ENCODE measurements at regions of chr20 and their contacts with region 1.

Region 1: DNA sequence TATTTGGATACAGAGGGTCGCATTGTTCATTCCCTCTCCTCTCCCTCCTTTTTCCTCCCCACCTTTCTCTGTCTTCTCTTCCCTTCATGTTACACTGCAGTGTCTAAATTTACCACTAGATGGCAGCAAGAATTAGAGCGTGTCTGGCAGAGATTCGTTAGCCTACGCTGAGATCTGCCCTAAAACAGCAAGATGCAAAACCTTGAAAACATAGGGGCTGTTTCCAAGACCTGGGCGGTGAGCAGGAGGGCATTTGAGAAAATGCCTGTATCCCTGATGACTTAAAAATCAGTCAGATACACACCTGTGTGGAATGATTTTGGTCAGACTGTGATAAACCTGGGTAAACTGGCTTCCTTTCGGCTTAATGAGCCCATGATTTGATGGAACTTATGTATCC is 101.5 kb upstream of the ISM1 start:
- DNase-seq: peak; percentile 77
- H3K4me3 Mint-ChIP-seq: no peak overlapping the region
- H3K27ac Mint-ChIP-seq: no peak overlapping the region
- H3K4me1 Mint-ChIP-seq: peaks cover 6% of the 10 kb centered on the region
- H3K27me3 Mint-ChIP-seq: no peaks in the 10 kb centered on the region
- CTCF ChIP-seq: peak; percentile 69

Region 2: GRCh38 chr20:13131688-13132087 is 12.1 kb after region 1 on chr20:
- CTCF ChIA-PET with region 1: interaction called, 31 read pairs
- POLR2A ChIA-PET with region 1: no interaction called
- intact Hi-C with region 1: no loop called
- DNase-seq: no peak
- H3K4me3 Mint-ChIP-seq: no peak overlapping the region
- H3K27ac Mint-ChIP-seq: no peak overlapping the region
- H3K4me1 Mint-ChIP-seq: no peaks in the 10 kb centered on the region
- H3K27me3 Mint-ChIP-seq: no peaks in the 10 kb centered on the region
- CTCF ChIP-seq: no peak

Region 3: GRCh38 chr20:13169086-13169485 is 49.5 kb after region 1 on chr20:
- CTCF ChIA-PET with region 1: interaction called, 10 read pairs
- POLR2A ChIA-PET with region 1: no interaction called
- intact Hi-C with region 1: no loop called
- DNase-seq: no peak
- H3K4me3 Mint-ChIP-seq: no peak overlapping the region
- H3K27ac Mint-ChIP-seq: no peak overlapping the region
- H3K4me1 Mint-ChIP-seq: no peaks in the 10 kb centered on the region
- H3K27me3 Mint-ChIP-seq: no peaks in the 10 kb centered on the region
- CTCF ChIP-seq: no peak

Region 4: GRCh38 chr20:13261460-13262301 is 142.1 kb after region 1 on chr20:
- CTCF ChIA-PET with region 1: interaction called, 7 read pairs
- POLR2A ChIA-PET with region 1: no interaction called
- intact Hi-C with region 1: loop called (anchors 1 kb)
- DNase-seq: peak; percentile 63
- H3K4me3 Mint-ChIP-seq: no peak overlapping the region
- H3K27ac Mint-ChIP-seq: no peak overlapping the region
- H3K4me1 Mint-ChIP-seq: peaks cover 8% of the 10 kb centered on the region
- H3K27me3 Mint-ChIP-seq: no peaks in the 10 kb centered on the region
- CTCF ChIP-seq: peak; percentile 62

Region 5: GRCh38 chr20:13533946-13534345 is 414.4 kb after region 1 on chr20:
- CTCF ChIA-PET with region 1: interaction called, 13 read pairs
- POLR2A ChIA-PET with region 1: no interaction called
- intact Hi-C with region 1: no loop called
- DNase-seq: no peak
- H3K4me3 Mint-ChIP-seq: no peak overlapping the region
- H3K27ac Mint-ChIP-seq: no peak overlapping the region
- H3K4me1 Mint-ChIP-seq: peaks cover 4% of the 10 kb centered on the region
- H3K27me3 Mint-ChIP-seq: no peaks in the 10 kb centered on the region
- CTCF ChIP-seq: no peak

Region 6: GRCh38 chr20:13777171-13777601 is 657.6 kb after region 1 on chr20:
- CTCF ChIA-PET with region 1: interaction called, 20 read pairs
- POLR2A ChIA-PET with region 1: no interaction called
- intact Hi-C with region 1: no loop called
- DNase-seq: peak; percentile 42
- H3K4me3 Mint-ChIP-seq: peak overlapping the region; percentile 43
- H3K27ac Mint-ChIP-seq: peak overlapping the region; percentile 63
- H3K4me1 Mint-ChIP-seq: peaks cover 38% of the 10 kb centered on the region
- H3K27me3 Mint-ChIP-seq: no peaks in the 10 kb centered on the region
- CTCF ChIP-seq: no peak